GM12878 (cell line): ENCODE measurements at regions of chr14 and their contacts with region 1.

Region 1: DNA sequence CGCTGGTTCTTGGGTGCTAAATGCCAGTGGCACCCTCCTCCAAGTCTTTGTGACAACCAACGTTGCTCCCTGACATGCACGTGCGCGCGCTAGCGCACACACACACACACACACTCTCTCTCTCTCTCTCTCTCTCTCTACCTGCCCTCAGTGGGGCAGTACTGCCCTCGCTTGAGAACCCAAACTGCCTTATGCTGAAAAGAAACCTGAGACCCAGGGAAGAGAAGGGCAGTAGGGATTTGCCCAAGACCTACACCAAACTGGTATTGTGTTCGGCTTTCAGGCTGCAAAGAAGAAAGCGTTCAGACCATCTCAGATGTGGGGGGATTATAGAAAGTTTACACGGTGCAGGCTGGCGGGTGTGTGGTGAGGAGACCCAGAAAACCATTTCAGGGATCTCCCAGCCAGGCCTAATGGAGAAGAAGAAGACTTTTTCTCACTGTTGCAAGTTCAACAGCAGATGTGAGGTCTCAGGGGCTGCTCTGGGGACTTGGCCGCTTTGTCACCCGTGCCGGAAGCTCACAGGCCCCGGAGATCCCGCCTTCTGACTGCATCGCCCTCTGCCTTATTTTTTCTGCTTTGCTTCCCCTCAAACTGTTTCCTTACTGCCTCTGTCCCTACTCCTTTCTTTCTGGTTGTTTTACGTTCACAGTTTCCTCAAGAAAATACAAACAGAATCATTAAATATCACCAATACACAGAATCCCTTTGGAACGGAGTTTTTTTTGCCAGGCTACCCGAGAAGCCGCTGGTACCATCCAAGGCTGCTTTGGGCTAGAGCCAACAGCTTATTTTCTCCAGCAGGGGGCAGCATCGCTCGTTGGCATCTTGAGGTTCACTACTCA is 82.4 kb downstream of the PPM1A start:
- DNase-seq: peak; percentile 52
- ATAC-seq: peak; percentile 80
- H3K4me3 ChIP-seq: peak overlapping the region; percentile 69
- H3K27ac ChIP-seq: peak overlapping the region; percentile 84
- H3K4me1 ChIP-seq: peaks cover 11% of the 10 kb centered on the region
- H3K27me3 ChIP-seq: no peaks in the 10 kb centered on the region
- CTCF ChIP-seq: peak; percentile 71 to 91 (median 84)
- EP300 ChIP-seq: no peak
- POLR2A ChIP-seq: peak; percentile 65
- RAD21 ChIP-seq: peak; percentile 68

Region 2: DNA sequence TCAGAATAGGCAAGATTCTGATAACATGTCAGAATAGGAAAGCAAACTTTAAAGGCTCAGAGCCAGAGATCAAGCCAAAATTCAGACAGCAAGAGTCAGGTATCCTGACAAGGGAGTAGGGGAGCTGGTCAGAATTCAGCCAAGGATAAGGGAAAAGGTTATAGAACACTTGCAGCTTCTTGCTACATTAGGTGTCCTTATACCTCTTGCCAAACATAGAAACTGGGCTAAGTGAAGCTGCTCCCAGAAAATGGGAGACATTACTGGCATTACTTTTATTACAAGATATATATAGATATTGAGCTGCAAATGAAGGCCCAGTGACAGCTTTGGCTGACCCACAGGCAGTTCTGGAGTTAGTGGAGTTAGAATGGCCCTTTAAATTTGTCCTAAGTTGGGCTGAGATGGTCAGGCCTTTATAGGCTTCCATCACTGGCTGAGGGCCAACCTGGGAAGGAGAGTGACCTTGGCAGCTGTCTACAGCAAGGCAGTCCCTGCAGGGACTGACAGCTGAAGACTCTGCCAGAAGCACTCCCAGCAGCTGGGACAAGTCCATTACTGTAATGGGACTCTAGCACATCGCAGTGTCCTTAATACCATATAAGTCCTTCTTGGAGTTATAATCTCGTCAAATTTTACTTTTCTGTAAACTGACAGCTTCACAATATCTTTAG is 328.5 kb before region 1 on chr14:
- CTCF ChIA-PET with region 1: no interaction called
- POLR2A ChIA-PET with region 1: no interaction called
- RAD21 ChIA-PET with region 1: no interaction called
- SMC1A ChIA-PET with region 1: no interaction called
- in situ Hi-C with region 1: no loop called
- intact Hi-C with region 1: no loop called
- DNase-seq: no peak
- ATAC-seq: no peak
- H3K4me3 ChIP-seq: no peak overlapping the region
- H3K27ac ChIP-seq: no peak overlapping the region
- H3K4me1 ChIP-seq: no peaks in the 10 kb centered on the region
- H3K27me3 ChIP-seq: no peaks in the 10 kb centered on the region
- CTCF ChIP-seq: no peak
- EP300 ChIP-seq: no peak
- POLR2A ChIP-seq: no peak
- RAD21 ChIP-seq: no peak

Region 3: GRCh38 chr14:60106339-60106738 is 225.1 kb before region 1 on chr14:
- CTCF ChIA-PET with region 1: no interaction called
- POLR2A ChIA-PET with region 1: no interaction called
- RAD21 ChIA-PET with region 1: no interaction called
- SMC1A ChIA-PET with region 1: no interaction called
- in situ Hi-C with region 1: no loop called
- intact Hi-C with region 1: no loop called
- DNase-seq: no peak
- ATAC-seq: peak; percentile 62
- H3K4me3 ChIP-seq: no peak overlapping the region
- H3K27ac ChIP-seq: no peak overlapping the region
- H3K4me1 ChIP-seq: no peaks in the 10 kb centered on the region
- H3K27me3 ChIP-seq: no peaks in the 10 kb centered on the region
- CTCF ChIP-seq: no peak
- EP300 ChIP-seq: no peak
- POLR2A ChIP-seq: no peak
- RAD21 ChIP-seq: no peak

Region 4: GRCh38 chr14:60164712-60165546 is 166.5 kb before region 1 on chr14 and contains the start of gene DHRS7:
- CTCF ChIA-PET with region 1: interaction called, 14 read pairs
- POLR2A ChIA-PET with region 1: no interaction called
- RAD21 ChIA-PET with region 1: interaction called, 7 read pairs
- SMC1A ChIA-PET with region 1: interaction called, 4 read pairs
- in situ Hi-C with region 1: no loop called
- intact Hi-C with region 1: no loop called
- DNase-seq: peak; percentile 53
- ATAC-seq: peak; percentile 96
- H3K4me3 ChIP-seq: peak within 1 kb of the TSS; percentile 92
- H3K27ac ChIP-seq: peak within 1 kb of the TSS; percentile 88
- H3K4me1 ChIP-seq: peaks cover 20% of the 10 kb centered on the region
- H3K27me3 ChIP-seq: no peaks in the 10 kb centered on the region
- CTCF ChIP-seq: peak; percentile 46 to 76 (median 52); a peak in 5 of 6 replicates
- EP300 ChIP-seq: 0 out of 4 replicates have a peak, but pooled peaks of 1 of the 2 experiments have one; percentile 20
- POLR2A ChIP-seq: peak; percentile 93
- RAD21 ChIP-seq: peak; percentile 65
- polyA plus RNA-seq, gene DHRS7: 59.1 to 66.1 TPM

Region 5: DNA sequence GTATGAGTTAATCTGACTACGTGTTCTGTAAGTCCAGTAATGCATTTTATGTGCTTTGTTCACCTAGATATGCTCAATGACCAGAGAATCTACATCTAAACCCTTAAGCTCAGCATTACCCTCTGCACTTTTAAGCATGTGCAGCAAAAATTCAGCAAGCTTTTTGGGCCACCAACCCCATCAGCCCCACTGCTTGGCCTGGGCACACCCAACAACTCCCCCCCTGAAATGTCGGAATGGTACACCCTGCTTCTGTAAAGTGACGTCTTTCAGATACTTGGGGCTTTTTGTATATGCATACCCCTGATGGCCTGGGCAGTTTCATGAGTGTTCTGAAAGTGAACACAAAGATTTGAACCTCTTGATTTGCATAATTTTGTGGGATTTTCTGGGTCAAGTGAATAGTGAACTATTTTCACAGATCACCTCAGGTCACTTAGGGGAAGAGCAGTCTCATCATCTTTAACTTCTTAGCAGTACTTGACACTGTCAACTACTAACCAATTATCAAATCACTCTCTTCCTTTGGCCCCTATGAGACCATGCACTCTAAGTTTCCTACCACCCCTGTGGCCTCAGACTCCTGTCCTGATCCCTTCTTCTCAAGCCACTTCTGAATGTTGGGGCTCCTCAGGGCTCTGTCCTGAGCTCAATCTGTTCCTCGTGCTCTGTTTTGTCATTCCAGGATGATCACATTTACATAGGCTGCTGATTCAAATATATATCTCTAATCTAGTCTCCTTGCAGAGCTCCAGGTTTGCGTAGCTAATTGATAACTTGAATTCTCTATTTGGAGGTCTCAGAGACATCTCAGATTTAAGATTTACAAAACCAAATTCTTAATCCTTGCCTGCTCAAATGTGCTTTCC is 118.7 kb before region 1 on chr14:
- CTCF ChIA-PET with region 1: interaction called, 18 read pairs
- POLR2A ChIA-PET with region 1: interaction called, 5 read pairs
- RAD21 ChIA-PET with region 1: interaction called, 72 read pairs
- SMC1A ChIA-PET with region 1: interaction called, 8 read pairs
- in situ Hi-C with region 1: no loop called
- intact Hi-C with region 1: no loop called
- DNase-seq: peak; percentile 98
- ATAC-seq: peak; percentile 89
- H3K4me3 ChIP-seq: no peak overlapping the region
- H3K27ac ChIP-seq: peak overlapping the region; percentile 93
- H3K4me1 ChIP-seq: peaks cover 39% of the 10 kb centered on the region
- H3K27me3 ChIP-seq: no peaks in the 10 kb centered on the region
- CTCF ChIP-seq: no peak
- EP300 ChIP-seq: peak; percentile 73 to 86
- POLR2A ChIP-seq: no peak; the same call in 1 of the 2 replicates
- RAD21 ChIP-seq: no peak

Region 6: GRCh38 chr14:60254176-60254575 is 77.2 kb before region 1 on chr14:
- CTCF ChIA-PET with region 1: interaction called, 15 read pairs
- POLR2A ChIA-PET with region 1: interaction called, 6 read pairs
- RAD21 ChIA-PET with region 1: interaction called, 72 read pairs
- SMC1A ChIA-PET with region 1: interaction called, 85 read pairs
- in situ Hi-C with region 1: no loop called
- intact Hi-C with region 1: no loop called
- DNase-seq: no peak
- ATAC-seq: no peak
- H3K4me3 ChIP-seq: peak overlapping the region; percentile 24; the same call in 1 of the 2 replicates
- H3K27ac ChIP-seq: no peak overlapping the region
- H3K4me1 ChIP-seq: no peaks in the 10 kb centered on the region
- H3K27me3 ChIP-seq: no peaks in the 10 kb centered on the region
- CTCF ChIP-seq: no peak
- EP300 ChIP-seq: no peak
- POLR2A ChIP-seq: no peak
- RAD21 ChIP-seq: no peak

Region 7: DNA sequence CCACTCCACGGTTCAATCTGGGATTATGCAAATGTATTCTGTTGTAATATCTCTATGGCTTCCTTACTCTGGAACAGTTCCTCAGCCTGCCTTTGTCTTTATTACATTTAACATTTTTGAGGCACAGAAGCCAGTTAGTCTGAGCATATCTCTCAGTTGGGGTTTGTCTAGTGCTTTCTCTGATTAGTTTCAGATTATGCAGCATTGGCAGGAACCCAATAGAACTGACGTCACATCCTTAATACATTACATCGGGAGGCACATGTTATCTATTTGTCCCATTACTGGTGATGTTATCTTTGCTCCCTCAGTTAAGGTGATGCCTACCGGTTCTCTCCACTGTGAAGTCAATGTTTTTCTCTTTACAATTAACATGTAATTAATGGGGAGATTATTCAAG is 20.0 kb before region 1 on chr14:
- CTCF ChIA-PET with region 1: interaction called, 4 read pairs
- POLR2A ChIA-PET with region 1: interaction called, 3 read pairs
- RAD21 ChIA-PET with region 1: interaction called, 11 read pairs
- SMC1A ChIA-PET with region 1: interaction called, 4 read pairs
- in situ Hi-C with region 1: no loop called
- intact Hi-C with region 1: no loop called
- DNase-seq: no peak
- ATAC-seq: no peak
- H3K4me3 ChIP-seq: no peak overlapping the region
- H3K27ac ChIP-seq: no peak overlapping the region
- H3K4me1 ChIP-seq: no peaks in the 10 kb centered on the region
- H3K27me3 ChIP-seq: no peaks in the 10 kb centered on the region
- CTCF ChIP-seq: no peak
- EP300 ChIP-seq: no peak
- POLR2A ChIP-seq: no peak
- RAD21 ChIP-seq: no peak

Region 8: GRCh38 chr14:60508707-60509437 is 177.4 kb after region 1 on chr14 and contains the start of gene SIX6:
- CTCF ChIA-PET with region 1: no interaction called
- POLR2A ChIA-PET with region 1: no interaction called
- RAD21 ChIA-PET with region 1: no interaction called
- SMC1A ChIA-PET with region 1: no interaction called
- in situ Hi-C with region 1: no loop called
- intact Hi-C with region 1: no loop called
- DNase-seq: no peak
- ATAC-seq: no peak
- H3K4me3 ChIP-seq: no peak within 1 kb of the TSS
- H3K27ac ChIP-seq: no peak within 1 kb of the TSS
- H3K4me1 ChIP-seq: no peaks in the 10 kb centered on the region
- H3K27me3 ChIP-seq: peaks cover 19 to 45% of the 10 kb centered on the region in 2 experiments
- CTCF ChIP-seq: no peak
- EP300 ChIP-seq: no peak
- POLR2A ChIP-seq: no peak
- RAD21 ChIP-seq: no peak
- polyA plus RNA-seq, gene SIX6: not detected

Region 9: GRCh38 chr14:60561845-60562746 is 230.7 kb after region 1 on chr14:
- CTCF ChIA-PET with region 1: interaction called, 46 read pairs
- POLR2A ChIA-PET with region 1: interaction called, 4 read pairs
- RAD21 ChIA-PET with region 1: interaction called, 24 read pairs
- SMC1A ChIA-PET with region 1: interaction called, 25 read pairs
- in situ Hi-C with region 1: no loop called
- intact Hi-C with region 1: loop called (anchors 5 kb)
- DNase-seq: peak; percentile 19
- ATAC-seq: peak; percentile 94
- H3K4me3 ChIP-seq: no peak overlapping the region
- H3K27ac ChIP-seq: no peak overlapping the region
- H3K4me1 ChIP-seq: 0 out of 2 replicates have a peak, but pooled peaks cover 5% of the 10 kb centered on the region
- H3K27me3 ChIP-seq: no peaks in the 10 kb centered on the region
- CTCF ChIP-seq: peak; percentile 72 to 90 (median 79)
- EP300 ChIP-seq: no peak
- POLR2A ChIP-seq: no peak
- RAD21 ChIP-seq: peak; percentile 89